ENCODE measurements at regions of chr3 and their contacts with region 1.

Region 1: GRCh38 chr3:42502429-42503250 is at the start of gene VIPR1:
- DNase-seq: peak; percentile 95
- H3K4me3 ChIP-seq: peak within 1 kb of the TSS; percentile 54 to 65
- H3K27ac ChIP-seq: peak within 1 kb of the TSS; percentile 83 to 84
- H3K4me1 ChIP-seq: peaks cover 3% of the 10 kb centered on the region
- H3K27me3 ChIP-seq: no peaks in the 10 kb centered on the region
- CTCF ChIP-seq: peak in 2 of 4 experiments; percentile 19 to 22
- POLR2A ChIP-seq: peak; percentile 91
- total RNA-seq, gene VIPR1: 98.5 to 226 TPM

Region 2: GRCh38 chr3:42403737-42404136 is 98.9 kb before region 1 on chr3:
- intact Hi-C with region 1: no loop called
- DNase-seq: no peak
- H3K4me3 ChIP-seq: no peak overlapping the region
- H3K27ac ChIP-seq: no peak overlapping the region
- H3K4me1 ChIP-seq: no peaks in the 10 kb centered on the region
- H3K27me3 ChIP-seq: no peaks in the 10 kb centered on the region
- CTCF ChIP-seq: no peak
- POLR2A ChIP-seq: no peak

Region 3: DNA sequence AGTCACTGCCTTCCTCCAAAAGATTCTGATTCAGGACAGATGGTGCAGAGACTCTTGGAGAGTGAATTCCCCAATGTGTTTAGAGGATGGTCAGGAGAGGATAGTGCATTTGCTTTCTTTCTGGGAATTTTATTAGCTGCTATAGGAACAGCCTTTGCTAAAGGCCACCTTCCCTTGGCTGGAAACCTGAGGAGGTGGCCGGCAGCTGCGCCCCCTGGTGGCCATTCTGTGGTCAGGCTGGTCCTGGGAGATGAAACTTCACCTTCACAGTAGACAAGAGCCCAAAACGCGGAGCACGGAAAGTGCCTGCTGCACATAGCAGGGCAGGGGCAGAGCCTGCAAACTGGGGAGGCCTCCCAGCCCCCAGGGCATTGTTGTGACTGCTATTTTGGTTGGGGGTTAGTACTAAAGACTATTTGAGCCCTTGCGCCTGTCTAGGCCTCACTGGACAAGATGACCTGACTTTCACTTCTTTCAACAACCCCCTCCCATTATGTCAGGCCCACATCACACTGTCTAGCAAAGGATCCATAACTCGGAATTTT is 44.8 kb after region 1 on chr3:
- intact Hi-C with region 1: loop called (anchors 5 kb)
- DNase-seq: peak; percentile 68
- H3K4me3 ChIP-seq: no peak overlapping the region
- H3K27ac ChIP-seq: peak overlapping the region; percentile 42 to 90
- H3K4me1 ChIP-seq: peaks cover 45% of the 10 kb centered on the region
- H3K27me3 ChIP-seq: no peaks in the 10 kb centered on the region
- CTCF ChIP-seq: peak; percentile 87 to 97 (median 92)
- POLR2A ChIP-seq: no peak

Region 4: DNA sequence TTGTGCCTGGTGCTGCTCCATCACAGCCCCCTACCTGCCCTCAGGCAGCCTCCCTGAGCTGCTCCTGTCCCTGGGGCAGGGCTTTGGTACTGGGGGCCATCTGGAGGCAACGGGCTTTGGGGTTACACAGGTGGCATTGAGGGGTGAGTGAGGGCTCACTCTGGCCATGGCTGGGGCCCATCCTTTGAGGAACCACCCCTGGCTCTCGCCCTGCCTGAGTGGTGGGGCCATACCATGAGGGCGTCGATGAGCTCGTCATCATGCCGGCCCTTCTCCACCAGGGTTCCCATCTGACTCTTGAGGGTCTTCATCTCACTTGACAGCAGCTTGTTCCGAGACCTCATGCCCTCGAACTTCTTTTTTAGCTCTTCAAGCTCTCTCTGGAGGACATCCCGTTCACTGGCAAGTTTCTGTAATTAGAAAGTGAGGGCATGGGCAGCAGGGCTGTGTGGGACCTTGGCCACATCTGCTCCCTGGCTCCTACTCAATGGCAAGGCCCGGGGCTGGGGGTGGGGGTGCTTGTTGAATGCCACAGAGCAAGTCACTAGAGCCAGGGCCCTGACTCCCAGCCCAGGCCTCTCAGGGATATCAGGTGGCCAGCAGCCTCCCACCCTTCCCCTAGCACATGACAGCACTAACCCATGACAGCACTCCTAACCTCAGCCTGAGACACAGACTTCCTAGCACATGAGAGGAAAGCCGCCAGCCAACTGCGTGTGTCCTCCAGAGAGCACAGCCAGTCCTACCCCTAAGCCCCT is 236.9 kb after region 1 on chr3:
- intact Hi-C with region 1: loop called (anchors 5 kb)
- DNase-seq: no peak
- H3K4me3 ChIP-seq: no peak overlapping the region
- H3K27ac ChIP-seq: no peak overlapping the region
- H3K4me1 ChIP-seq: no peaks in the 10 kb centered on the region
- H3K27me3 ChIP-seq: no peaks in the 10 kb centered on the region
- CTCF ChIP-seq: no peak
- POLR2A ChIP-seq: no peak

Region 5: DNA sequence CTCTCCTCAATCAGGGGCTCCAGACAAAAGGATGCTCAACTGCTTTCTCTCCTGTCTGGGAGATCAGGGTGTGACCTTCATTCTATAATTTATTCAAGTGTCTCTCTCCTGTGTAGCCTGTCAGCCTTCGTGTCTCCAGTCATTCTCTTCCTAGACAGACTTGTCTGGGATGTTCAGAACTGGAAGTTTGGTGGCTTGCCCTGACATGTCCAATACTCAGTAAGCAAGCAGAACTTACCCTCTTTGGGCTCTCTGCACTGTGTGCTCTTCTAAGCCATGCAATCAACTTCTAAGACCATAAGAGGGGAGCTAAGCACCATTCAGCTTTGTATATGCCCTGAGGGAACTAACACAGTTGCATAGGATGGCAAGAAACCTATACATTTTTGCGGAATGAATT is 320.7 kb after region 1 on chr3:
- intact Hi-C with region 1: loop called (anchors 5 kb)
- DNase-seq: peak; percentile 67
- H3K4me3 ChIP-seq: no peak overlapping the region
- H3K27ac ChIP-seq: no peak overlapping the region
- H3K4me1 ChIP-seq: no peaks in the 10 kb centered on the region
- H3K27me3 ChIP-seq: no peaks in the 10 kb centered on the region
- CTCF ChIP-seq: no peak
- POLR2A ChIP-seq: no peak

Region 6: DNA sequence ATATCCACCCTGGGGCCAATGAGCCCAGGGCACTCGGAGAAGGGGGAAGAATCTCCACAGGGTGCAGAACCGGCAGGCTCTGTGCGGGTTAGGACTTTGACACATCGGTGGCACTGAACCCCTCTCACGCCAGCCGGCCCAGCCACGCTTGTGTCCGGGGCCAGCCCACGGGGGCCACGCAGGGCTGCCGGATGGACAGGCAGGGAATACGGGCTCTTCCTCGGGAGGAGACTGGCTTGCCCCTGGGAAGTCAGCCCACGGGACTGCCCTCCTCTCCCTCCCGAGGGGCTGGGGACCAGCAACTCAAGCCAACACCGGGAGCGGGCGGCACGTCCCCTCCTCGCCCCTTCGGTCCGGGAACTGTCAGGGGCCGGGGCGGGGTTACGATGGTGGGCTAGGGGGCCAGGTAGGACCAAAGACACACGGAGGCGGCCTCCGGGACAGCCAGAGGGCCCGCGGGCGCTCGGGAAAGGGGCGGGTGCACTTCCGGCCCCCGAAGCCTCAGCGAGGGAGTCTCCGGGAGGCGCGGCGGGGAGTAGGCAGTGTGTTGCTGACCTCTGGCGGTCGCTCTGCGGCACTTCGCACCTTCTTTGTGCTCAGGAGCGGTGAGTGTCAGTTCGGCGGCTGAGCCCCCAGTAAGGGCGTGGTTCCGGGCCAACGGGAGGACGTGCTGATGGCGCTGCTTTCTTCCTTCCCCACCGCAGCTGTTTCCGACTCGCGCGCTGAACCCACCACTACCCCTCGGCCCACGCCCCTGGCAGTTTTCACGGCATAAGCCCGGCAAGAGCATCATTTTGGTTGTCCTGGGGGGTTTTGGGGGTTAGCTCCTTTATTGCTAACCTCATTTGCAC is 378.2 kb after region 1 on chr3:
- intact Hi-C with region 1: loop called (anchors 5 kb)
- DNase-seq: peak; percentile 80
- H3K4me3 ChIP-seq: peak overlapping the region; percentile 58 to 59
- H3K27ac ChIP-seq: peak overlapping the region; percentile 67 to 73
- H3K4me1 ChIP-seq: no peaks in the 10 kb centered on the region
- H3K27me3 ChIP-seq: no peaks in the 10 kb centered on the region
- CTCF ChIP-seq: peak; percentile 73 to 94 (median 90)
- POLR2A ChIP-seq: no peak